ENCODE measurements at regions of chr6 and their contacts with region 1.

Region 1: DNA sequence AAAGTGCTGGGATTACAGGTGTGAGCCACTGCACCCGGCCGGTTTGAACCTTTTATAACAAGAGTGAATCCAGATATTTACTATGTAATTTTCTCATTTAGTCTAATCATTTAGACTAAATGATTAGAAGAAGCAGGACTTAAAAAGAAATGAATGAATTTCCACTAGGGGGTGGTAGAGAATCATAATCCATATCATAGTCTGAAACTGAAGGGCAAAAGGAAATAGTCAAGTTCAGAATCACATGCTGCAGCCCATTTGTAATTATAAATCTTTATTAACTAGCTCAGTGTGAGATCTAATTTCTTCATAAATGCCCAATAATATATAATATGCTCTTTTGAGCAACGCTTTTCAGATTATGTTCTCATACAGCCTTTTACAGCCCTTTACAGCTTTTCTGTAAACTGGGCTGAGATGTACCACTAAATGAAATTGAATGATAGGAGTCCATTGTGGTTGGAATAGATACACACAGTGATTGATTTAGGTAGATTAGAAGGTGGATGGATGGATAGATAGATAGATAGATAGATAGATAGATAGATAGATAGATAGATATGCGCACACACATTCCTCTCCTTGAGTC is 31.8 kb downstream of the PSMB9 start:
- DNase-seq: peak in 7 of 9 donors; percentile 48 to 78 (median 68)
- ATAC-seq: peak; percentile 69
- H3K4me3 ChIP-seq: no peak overlapping the region
- H3K4me3 Mint-ChIP-seq: no peak overlapping the region
- H3K27ac ChIP-seq: no peak overlapping the region
- H3K27ac Mint-ChIP-seq: no peak overlapping the region
- H3K4me1 ChIP-seq: no peaks in the 10 kb centered on the region
- H3K4me1 Mint-ChIP-seq: peaks cover 0 to 4% (median 0%) of the 10 kb centered on the region in 7 donors
- H3K27me3 ChIP-seq: no peaks in the 10 kb centered on the region
- H3K27me3 Mint-ChIP-seq: peaks cover 0 to 10% (median 0%) of the 10 kb centered on the region in 5 donors

Region 2: GRCh38 chr6:32829495-32829894 is 56.3 kb before region 1 on chr6:
- CTCF ChIA-PET with region 1: no interaction called
- POLR2A ChIA-PET with region 1: no interaction called
- intact Hi-C with region 1: no loop called
- DNase-seq: no peak
- ATAC-seq: no peak
- H3K4me3 ChIP-seq: no peak overlapping the region
- H3K4me3 Mint-ChIP-seq: no peak overlapping the region
- H3K27ac ChIP-seq: no peak overlapping the region
- H3K27ac Mint-ChIP-seq: peak overlapping the region in 1 of 9 donors; percentile 54
- H3K4me1 ChIP-seq: no peaks in the 10 kb centered on the region
- H3K4me1 Mint-ChIP-seq: peaks cover 12 to 67% (median 27%) of the 10 kb centered on the region in 7 donors
- H3K27me3 ChIP-seq: no peaks in the 10 kb centered on the region
- H3K27me3 Mint-ChIP-seq: no peaks in the 10 kb centered on the region

Region 3: DNA sequence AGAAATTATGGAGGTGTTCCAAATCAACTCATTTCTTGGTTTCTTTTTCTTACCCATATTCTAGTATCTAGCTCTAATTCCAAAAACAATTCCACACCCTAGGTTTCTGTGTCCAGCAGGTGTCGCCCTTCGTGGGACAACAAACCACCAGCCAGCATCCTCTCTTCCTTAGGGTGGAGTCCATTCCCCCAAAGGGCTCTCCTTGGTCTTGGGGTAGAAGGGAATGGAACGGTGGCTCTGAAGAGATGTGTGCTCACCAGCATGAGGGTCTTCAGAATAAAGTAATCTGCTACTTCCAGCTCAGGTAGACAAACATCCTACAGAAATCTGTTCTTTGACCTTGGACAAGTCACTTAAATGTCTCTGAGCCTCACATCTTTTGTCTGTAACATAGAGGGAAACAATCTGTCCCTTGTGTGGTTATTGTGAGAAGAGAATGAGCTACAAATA is 47.9 kb after region 1 on chr6:
- CTCF ChIA-PET with region 1: interaction called, 14 read pairs
- POLR2A ChIA-PET with region 1: no interaction called
- intact Hi-C with region 1: loop called (anchors 1 kb)
- DNase-seq: peak; percentile 47 to 77 (median 67)
- ATAC-seq: peak; percentile 79
- H3K4me3 ChIP-seq: no peak overlapping the region
- H3K4me3 Mint-ChIP-seq: no peak overlapping the region
- H3K27ac ChIP-seq: no peak overlapping the region
- H3K27ac Mint-ChIP-seq: peak overlapping the region in 2 of 9 donors; percentile 32 to 45
- H3K4me1 ChIP-seq: no peaks in the 10 kb centered on the region
- H3K4me1 Mint-ChIP-seq: peaks cover 0 to 24% (median 6%) of the 10 kb centered on the region in 7 donors
- H3K27me3 ChIP-seq: no peaks in the 10 kb centered on the region
- H3K27me3 Mint-ChIP-seq: peaks cover 0 to 35% (median 0%) of the 10 kb centered on the region in 5 donors

Region 4: GRCh38 chr6:32947552-32948465 is 62.0 kb after region 1 on chr6:
- CTCF ChIA-PET with region 1: interaction called, 18 read pairs
- POLR2A ChIA-PET with region 1: interaction called, 3 read pairs
- intact Hi-C with region 1: loop called (anchors 1 kb)
- DNase-seq: peak in 6 of 9 donors; percentile 19 to 54 (median 36)
- ATAC-seq: peak; percentile 37
- H3K4me3 ChIP-seq: no peak overlapping the region
- H3K4me3 Mint-ChIP-seq: no peak overlapping the region
- H3K27ac ChIP-seq: no peak overlapping the region
- H3K27ac Mint-ChIP-seq: peak overlapping the region in 1 of 9 donors; percentile 47
- H3K4me1 ChIP-seq: peaks cover 32 to 45% of the 10 kb centered on the region in 2 donors
- H3K4me1 Mint-ChIP-seq: peaks cover 54 to 73% (median 63%) of the 10 kb centered on the region in 7 donors
- H3K27me3 ChIP-seq: no peaks in the 10 kb centered on the region
- H3K27me3 Mint-ChIP-seq: no peaks in the 10 kb centered on the region

Measured in naive thymus-derived CD4-positive, alpha-beta T cell (primary cell).